HAP-1 (cell line): ENCODE measurements at regions of chr20 and their contacts with region 1.

Region 1: DNA sequence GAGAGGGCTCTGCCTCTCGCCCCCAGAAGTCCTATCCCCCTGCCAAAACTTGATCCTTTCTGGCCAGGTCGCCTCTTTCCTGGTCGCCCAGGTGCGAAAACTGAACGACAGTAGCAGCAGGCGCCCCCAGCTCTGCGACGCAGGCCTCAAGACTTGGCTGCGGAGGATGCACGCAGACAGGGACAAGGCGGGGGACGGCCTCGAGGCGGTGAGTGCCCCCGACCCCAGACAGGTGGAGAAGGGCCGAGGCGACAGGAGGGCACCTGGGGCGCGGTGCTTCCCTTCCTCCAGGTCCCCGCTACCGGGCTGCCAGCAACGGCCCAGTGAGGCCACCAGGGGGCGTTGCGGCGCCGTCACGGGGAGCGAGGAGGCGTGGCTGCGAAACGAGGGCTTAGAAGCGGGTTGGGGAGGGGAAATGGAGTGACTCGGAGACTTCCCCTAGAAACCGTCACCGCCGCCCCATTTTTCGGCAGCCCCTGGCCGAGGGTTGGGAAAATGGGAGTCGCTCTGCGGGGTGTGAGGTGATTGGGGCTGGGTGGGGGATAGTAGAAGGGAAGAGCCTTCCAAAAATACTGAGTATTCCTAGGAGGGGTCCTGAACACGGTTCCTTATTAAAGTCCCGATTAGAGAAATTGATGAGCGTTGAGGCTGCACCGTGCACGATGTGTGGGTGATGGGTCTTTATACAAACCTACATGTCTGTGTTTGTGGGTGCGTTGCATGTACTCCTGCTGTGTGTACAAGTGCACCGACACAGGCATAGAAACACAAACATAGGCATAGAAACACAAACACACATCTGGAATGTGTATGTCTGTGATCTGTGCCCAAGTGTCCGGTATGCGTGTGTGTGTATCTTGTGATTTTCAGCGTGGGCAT is 44.6 kb downstream of the ARHGAP40 start:
- DNase-seq: peak; percentile 62 to 88
- H3K4me3 ChIP-seq: peak overlapping the region; percentile 15
- H3K4me1 ChIP-seq: no peaks in the 10 kb centered on the region; the same call in 1 of the 2 replicates
- H3K27me3 ChIP-seq: peaks cover 5% of the 10 kb centered on the region; the same call in 1 of the 2 replicates

Region 2: GRCh38 chr20:38730989-38731737 is 84.9 kb after region 1 on chr20:
- in situ Hi-C with region 1: loop called (anchors 5 kb)
- DNase-seq: peak; percentile 81 to 93
- H3K4me3 ChIP-seq: peak overlapping the region; percentile 32
- H3K4me1 ChIP-seq: peaks cover 3% of the 10 kb centered on the region; the same call in 1 of the 2 replicates
- H3K27me3 ChIP-seq: peaks cover 44% of the 10 kb centered on the region

Region 3: DNA sequence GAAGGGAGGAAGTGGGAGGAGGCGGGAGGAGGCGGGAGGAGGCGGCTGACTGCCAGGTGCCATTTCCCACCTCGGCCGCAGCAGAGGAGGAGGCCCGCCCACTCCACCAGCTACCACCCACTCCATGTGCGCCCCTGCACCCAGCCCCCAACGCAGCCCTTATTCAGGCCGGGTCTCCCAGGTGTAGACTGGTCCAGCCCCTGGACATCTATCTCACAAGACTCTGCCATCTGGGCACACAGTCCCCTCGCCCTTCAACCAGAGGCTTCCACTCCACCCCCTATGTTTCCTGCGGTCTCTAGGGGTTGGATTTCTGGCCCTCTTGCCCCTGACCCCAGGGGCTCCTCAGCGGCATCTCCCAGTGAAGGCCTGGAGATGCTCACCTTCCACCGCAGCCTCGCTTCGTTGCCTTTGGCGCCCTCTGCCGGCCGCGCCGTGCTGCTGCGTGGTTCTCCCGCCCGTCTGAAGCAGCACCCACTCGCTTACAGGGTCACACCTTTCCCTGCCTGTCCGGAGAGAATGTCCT is 247.4 kb after region 1 on chr20:
- in situ Hi-C with region 1: loop called (anchors 10 kb)
- DNase-seq: peak; percentile 43 to 80
- H3K4me3 ChIP-seq: no peak overlapping the region
- H3K4me1 ChIP-seq: no peaks in the 10 kb centered on the region
- H3K27me3 ChIP-seq: peaks cover 5% of the 10 kb centered on the region; the same call in 1 of the 2 replicates

Region 4: GRCh38 chr20:39049684-39050554 is 403.7 kb after region 1 on chr20:
- in situ Hi-C with region 1: loop called (anchors 10 kb)
- DNase-seq: peak; percentile 40 to 88
- H3K4me3 ChIP-seq: peak overlapping the region; percentile 49
- H3K4me1 ChIP-seq: peaks cover 9% of the 10 kb centered on the region
- H3K27me3 ChIP-seq: no peaks in the 10 kb centered on the region